ENCODE measurements at regions of chr4 and their contacts with region 1.

Region 1: GRCh38 chr4:140237606-140237986 is 83.6 kb upstream of the MAML3 start:
- DNase-seq: peak; percentile 85 to 89
- ATAC-seq: peak; percentile 84
- H3K4me3 ChIP-seq: no peak overlapping the region
- H3K27ac ChIP-seq: peak overlapping the region in 1 of 2 donors; percentile 53
- H3K4me1 ChIP-seq: no peaks in the 10 kb centered on the region
- H3K27me3 ChIP-seq: no peaks in the 10 kb centered on the region

Region 2: GRCh38 chr4:139734875-139735380 is 502.7 kb before region 1 on chr4:
- intact Hi-C with region 1: loop called in 1 of 2 experiments (anchors 5 kb)
- DNase-seq: peak; percentile 89 to 95
- ATAC-seq: peak; percentile 98
- H3K4me3 ChIP-seq: peak overlapping the region; percentile 57 to 72
- H3K27ac ChIP-seq: peak overlapping the region in 1 of 2 donors; percentile 2
- H3K4me1 ChIP-seq: peaks cover under 1 to 2% of the 10 kb centered on the region in 2 donors
- H3K27me3 ChIP-seq: no peaks in the 10 kb centered on the region

Region 3: GRCh38 chr4:139887962-139888735 is 349.4 kb before region 1 on chr4:
- intact Hi-C with region 1: no loop called
- DNase-seq: no peak
- ATAC-seq: no peak
- H3K4me3 ChIP-seq: no peak overlapping the region
- H3K27ac ChIP-seq: no peak overlapping the region
- H3K4me1 ChIP-seq: no peaks in the 10 kb centered on the region
- H3K27me3 ChIP-seq: no peaks in the 10 kb centered on the region

Region 4: DNA sequence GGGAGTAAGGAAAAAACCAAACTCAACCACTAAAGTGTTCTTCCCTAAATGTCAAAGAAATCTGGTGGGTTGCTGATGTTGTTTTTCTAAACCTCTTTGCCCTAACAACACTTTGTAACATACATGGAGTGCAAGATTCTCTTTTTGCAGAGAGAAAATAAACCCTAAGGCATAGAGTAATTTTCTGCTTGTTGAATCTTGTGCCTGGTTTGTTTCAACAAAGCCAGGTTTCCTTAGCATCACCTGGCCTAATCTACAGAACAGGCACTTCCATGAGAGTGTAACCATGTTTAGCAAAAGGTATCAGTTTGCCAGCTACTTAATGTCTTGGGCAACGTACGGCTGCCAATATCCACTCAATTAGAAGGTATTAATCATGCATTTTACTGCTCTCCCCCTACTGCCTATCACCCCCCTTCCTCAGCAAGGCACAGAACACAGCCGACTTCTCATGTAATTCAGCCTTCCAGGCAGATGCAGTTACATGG is 302.8 kb before region 1 on chr4:
- intact Hi-C with region 1: no loop called
- DNase-seq: no peak
- ATAC-seq: no peak
- H3K4me3 ChIP-seq: no peak overlapping the region
- H3K27ac ChIP-seq: no peak overlapping the region
- H3K4me1 ChIP-seq: no peaks in the 10 kb centered on the region
- H3K27me3 ChIP-seq: no peaks in the 10 kb centered on the region

Region 5: DNA sequence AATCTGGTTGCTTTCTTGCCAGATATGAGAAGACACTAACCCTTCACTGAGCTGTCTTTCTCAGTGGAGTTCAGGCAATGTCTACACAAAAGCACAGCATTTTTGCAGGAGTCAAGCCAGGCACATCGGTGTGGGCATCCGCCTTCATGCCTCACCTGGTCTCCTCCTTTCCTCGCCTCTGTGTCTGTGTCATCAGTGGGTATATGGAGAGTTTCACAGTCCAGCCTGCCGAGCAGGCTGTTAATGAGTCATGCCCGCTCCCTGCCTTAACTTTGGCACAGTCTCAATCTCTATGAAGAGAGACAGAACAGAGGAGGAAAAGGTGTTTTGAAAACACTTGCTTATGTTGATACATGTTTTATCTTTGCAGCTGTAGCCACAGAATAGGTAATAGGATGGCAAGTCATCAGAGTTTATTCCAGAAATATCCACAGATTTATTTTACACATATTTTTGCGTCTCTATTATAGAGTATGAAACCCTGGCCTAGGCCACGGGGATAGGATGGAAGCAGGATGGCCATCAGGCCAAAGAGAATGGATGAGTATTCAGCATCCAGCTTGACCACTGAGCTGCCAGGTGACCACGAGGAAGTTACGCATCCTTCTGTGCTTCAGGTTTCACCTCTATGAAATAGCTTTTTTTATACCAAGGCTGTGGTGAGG is 50.8 kb before region 1 on chr4:
- intact Hi-C with region 1: loop called in 1 of 2 experiments (anchors 10 kb)
- DNase-seq: no peak
- ATAC-seq: no peak
- H3K4me3 ChIP-seq: no peak overlapping the region
- H3K27ac ChIP-seq: no peak overlapping the region
- H3K4me1 ChIP-seq: peaks cover 0 to 4% of the 10 kb centered on the region in 2 donors
- H3K27me3 ChIP-seq: no peaks in the 10 kb centered on the region